Right cardiac atrium (tissue), 5 donors: ENCODE measurements at regions of chr22 and their contacts with region 1.

Region 1: GRCh38 chr22:33451866-33452469 is 393.8 kb upstream of the SYN3 start:
- DNase-seq: no peak
- ATAC-seq: peak; percentile 12 to 14
- H3K4me3 ChIP-seq: no peak overlapping the region
- H3K27ac ChIP-seq: no peak overlapping the region
- H3K4me1 ChIP-seq: peaks cover 3% of the 10 kb centered on the region
- H3K27me3 ChIP-seq: no peaks in the 10 kb centered on the region

Region 2: GRCh38 chr22:33389936-33390335 is 62.0 kb before region 1 on chr22:
- intact Hi-C with region 1: loop called in 1 of 4 experiments (anchors 10 kb)
- DNase-seq: no peak
- ATAC-seq: no peak
- H3K4me3 ChIP-seq: no peak overlapping the region
- H3K27ac ChIP-seq: no peak overlapping the region
- H3K4me1 ChIP-seq: no peaks in the 10 kb centered on the region
- H3K27me3 ChIP-seq: no peaks in the 10 kb centered on the region

Region 3: GRCh38 chr22:33409079-33409478 is 42.9 kb before region 1 on chr22:
- intact Hi-C with region 1: no loop called
- DNase-seq: no peak
- ATAC-seq: no peak
- H3K4me3 ChIP-seq: no peak overlapping the region
- H3K27ac ChIP-seq: no peak overlapping the region
- H3K4me1 ChIP-seq: peaks cover 8% of the 10 kb centered on the region
- H3K27me3 ChIP-seq: no peaks in the 10 kb centered on the region